ENCODE measurements at regions of chr1 and their contacts with region 1.

Region 1: GRCh38 chr1:205061665-205062069 is 18.7 kb downstream of the CNTN2 start:
- DNase-seq: peak; percentile 85
- H3K4me3 Mint-ChIP-seq: no peak overlapping the region
- H3K27ac Mint-ChIP-seq: no peak overlapping the region
- H3K4me1 Mint-ChIP-seq: no peaks in the 10 kb centered on the region
- H3K27me3 Mint-ChIP-seq: peaks cover 21% of the 10 kb centered on the region
- CTCF ChIP-seq: peak; percentile 99

Region 2: DNA sequence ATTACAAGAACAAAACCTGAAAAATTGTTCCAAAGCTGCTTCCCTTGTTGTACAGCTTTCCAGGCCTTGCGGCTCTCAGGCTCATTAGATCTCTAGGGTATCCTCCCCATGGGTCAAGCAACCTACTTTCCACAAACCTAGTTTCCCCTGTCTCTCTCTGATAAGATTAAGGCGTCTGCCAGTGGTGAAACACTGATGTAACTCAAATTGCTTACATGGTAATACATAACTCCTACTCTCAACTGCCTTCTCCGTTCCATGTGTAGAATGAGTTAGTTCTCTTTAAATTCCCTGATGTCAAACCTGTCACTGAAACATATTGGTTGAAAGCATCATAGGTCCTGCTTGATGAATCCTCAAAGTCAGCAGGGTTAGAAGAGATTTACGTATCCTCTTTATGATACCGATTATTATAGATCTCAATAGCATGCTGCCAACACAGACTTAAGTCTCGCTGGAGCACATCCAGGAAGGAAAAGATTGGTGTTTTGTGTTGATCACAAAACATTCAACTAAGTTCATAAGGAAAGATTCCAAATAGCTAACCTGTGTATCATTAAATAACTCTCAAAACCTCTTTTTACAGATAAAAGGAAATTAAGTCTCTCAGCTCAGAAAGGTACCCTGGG is 660.7 kb before region 1 on chr1:
- CTCF ChIA-PET with region 1: no interaction called
- POLR2A ChIA-PET with region 1: no interaction called
- intact Hi-C with region 1: no loop called
- DNase-seq: no peak
- H3K4me3 Mint-ChIP-seq: no peak overlapping the region
- H3K27ac Mint-ChIP-seq: peak overlapping the region; percentile 14
- H3K4me1 Mint-ChIP-seq: peaks cover 17% of the 10 kb centered on the region
- H3K27me3 Mint-ChIP-seq: no peaks in the 10 kb centered on the region
- CTCF ChIP-seq: no peak

Region 3: GRCh38 chr1:204812832-204813231 is 248.8 kb before region 1 on chr1:
- CTCF ChIA-PET with region 1: interaction called, 38 read pairs
- POLR2A ChIA-PET with region 1: no interaction called
- intact Hi-C with region 1: no loop called
- DNase-seq: no peak
- H3K4me3 Mint-ChIP-seq: no peak overlapping the region
- H3K27ac Mint-ChIP-seq: no peak overlapping the region
- H3K4me1 Mint-ChIP-seq: no peaks in the 10 kb centered on the region
- H3K27me3 Mint-ChIP-seq: peaks cover 50% of the 10 kb centered on the region
- CTCF ChIP-seq: no peak

Region 4: DNA sequence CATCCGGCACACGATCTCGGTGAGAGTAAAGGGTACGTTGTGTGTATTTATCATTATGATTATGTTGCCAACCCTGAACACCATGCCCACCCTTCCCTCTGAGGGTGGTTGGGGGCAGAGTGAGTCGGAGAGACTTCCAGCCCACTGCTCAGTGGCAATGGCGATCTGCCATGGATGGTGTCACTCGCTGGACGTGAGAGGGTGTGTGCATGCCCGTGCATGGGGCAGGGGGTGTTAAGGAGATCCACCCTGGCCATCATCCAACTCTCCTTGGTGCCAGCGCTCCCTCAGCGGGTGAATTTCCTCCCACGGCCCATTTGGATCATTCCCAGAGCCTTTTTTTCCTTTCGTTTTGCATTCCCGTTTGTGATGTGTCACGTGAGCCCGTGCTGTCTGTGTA is 92.7 kb before region 1 on chr1:
- CTCF ChIA-PET with region 1: interaction called, 272 read pairs
- POLR2A ChIA-PET with region 1: interaction called, 3 read pairs
- intact Hi-C with region 1: no loop called
- DNase-seq: no peak
- H3K4me3 Mint-ChIP-seq: no peak overlapping the region
- H3K27ac Mint-ChIP-seq: no peak overlapping the region
- H3K4me1 Mint-ChIP-seq: peaks cover 8% of the 10 kb centered on the region
- H3K27me3 Mint-ChIP-seq: peaks cover 92% of the 10 kb centered on the region
- CTCF ChIP-seq: no peak

Region 5: GRCh38 chr1:204997591-204998355 is 63.9 kb before region 1 on chr1:
- CTCF ChIA-PET with region 1: interaction called, 331 read pairs
- POLR2A ChIA-PET with region 1: interaction called, 6 read pairs
- intact Hi-C with region 1: no loop called
- DNase-seq: no peak
- H3K4me3 Mint-ChIP-seq: no peak overlapping the region
- H3K27ac Mint-ChIP-seq: no peak overlapping the region
- H3K4me1 Mint-ChIP-seq: no peaks in the 10 kb centered on the region
- H3K27me3 Mint-ChIP-seq: peaks cover 69% of the 10 kb centered on the region
- CTCF ChIP-seq: no peak

Region 6: DNA sequence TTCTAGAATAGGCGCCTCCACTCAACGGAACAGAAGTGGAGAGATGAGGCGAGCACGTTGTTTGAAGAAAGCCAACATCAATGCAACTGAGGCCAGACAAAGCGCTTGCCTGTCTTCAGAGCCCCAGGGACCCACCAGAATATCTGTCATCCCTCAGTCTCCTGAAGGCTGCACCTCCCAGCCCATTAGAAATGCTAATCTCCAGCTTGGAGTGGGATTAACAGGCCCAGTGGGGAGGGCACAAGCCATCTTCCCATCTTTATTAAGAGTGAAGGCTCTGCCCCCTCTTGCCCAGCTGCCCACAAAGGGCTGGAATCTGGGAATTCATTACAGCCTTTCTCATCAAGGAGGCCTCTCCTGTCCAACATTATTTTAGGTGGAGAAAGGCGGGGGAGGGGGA is 35.5 kb before region 1 on chr1:
- CTCF ChIA-PET with region 1: interaction called, 48 read pairs
- POLR2A ChIA-PET with region 1: no interaction called
- intact Hi-C with region 1: no loop called
- DNase-seq: no peak
- H3K4me3 Mint-ChIP-seq: no peak overlapping the region
- H3K27ac Mint-ChIP-seq: no peak overlapping the region
- H3K4me1 Mint-ChIP-seq: no peaks in the 10 kb centered on the region
- H3K27me3 Mint-ChIP-seq: peaks cover 63% of the 10 kb centered on the region
- CTCF ChIP-seq: no peak

Region 7: DNA sequence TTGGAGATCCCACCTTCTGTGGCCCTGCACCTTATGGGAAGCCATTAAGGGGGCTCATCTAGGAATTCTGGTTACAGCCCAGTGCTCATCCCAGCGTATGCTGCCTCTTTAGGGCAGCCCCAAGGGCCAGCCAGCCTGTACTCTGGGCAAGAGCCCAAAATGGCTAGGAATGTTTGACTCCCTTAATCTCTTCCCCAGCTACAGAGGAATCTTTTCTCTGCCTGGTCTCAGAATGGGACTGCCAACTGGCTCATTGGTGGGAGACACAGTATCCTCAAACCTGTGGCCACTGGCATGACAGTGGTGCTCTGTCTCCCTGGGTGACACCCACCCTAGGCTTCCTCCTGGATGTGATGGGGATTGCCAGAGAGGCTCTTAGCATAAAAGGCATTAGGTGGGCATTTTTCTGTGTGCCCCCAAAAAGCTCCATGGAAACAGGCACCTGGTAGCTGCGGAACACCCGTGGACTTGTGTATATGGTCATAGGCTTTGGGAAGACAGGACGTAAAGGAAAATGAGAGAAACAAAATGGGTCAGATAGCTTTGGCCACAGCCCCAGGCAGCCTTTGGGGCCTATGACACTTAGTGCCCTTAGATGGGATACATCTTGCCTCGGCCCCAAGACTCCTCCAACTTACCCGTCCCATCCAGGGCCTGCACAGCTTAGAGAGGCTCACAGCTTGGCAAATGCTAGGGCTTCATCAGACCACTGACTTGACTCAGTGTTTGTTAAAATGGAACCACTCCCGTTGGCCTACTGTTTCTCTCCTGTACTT is 15.7 kb after region 1 on chr1:
- CTCF ChIA-PET with region 1: interaction called, 182 read pairs
- POLR2A ChIA-PET with region 1: interaction called, 5 read pairs
- intact Hi-C with region 1: no loop called
- DNase-seq: no peak
- H3K4me3 Mint-ChIP-seq: no peak overlapping the region
- H3K27ac Mint-ChIP-seq: no peak overlapping the region
- H3K4me1 Mint-ChIP-seq: peaks cover 28% of the 10 kb centered on the region
- H3K27me3 Mint-ChIP-seq: no peaks in the 10 kb centered on the region
- CTCF ChIP-seq: no peak

Region 8: DNA sequence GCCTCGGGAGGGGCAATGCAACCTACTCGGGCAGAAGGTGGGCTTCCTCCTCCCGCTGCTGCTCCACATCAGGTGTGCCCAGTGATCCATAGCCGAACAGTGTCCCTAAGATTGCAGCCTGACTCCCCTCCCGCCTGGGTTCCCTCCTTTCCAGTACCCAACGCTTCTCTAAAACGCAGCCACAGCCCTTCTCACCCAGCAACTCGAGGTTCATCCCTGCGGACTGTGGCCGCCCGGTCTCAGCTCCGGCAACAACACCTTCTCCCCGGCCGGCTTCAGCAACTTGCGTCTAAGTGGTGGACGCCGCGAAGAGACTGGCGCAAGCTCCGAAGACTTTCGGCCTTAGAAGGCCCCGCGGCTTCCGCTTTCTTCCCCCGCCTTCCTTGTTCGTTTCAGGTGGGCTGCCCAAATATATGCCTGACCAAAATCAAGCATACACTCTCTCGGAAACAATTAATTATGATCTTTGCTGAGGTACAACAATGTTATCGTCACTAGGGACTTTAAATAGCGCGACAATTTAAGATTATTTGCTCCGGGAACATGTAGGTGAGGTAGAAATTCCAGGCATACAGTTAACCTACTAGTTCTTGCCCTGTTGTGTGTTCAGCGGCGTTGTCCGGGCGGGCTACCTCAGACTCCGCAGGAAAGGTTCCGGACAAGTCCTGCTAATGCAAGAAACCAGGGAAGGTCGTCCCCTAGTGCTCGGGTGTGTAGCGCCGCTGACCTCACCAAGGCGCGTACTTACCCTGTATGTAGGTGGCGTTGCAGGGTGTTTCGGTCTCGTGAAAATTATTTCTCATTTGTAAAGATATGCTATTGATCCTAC is 60.2 kb after region 1 on chr1 and contains the start of gene RBBP5:
- CTCF ChIA-PET with region 1: interaction called, 45 read pairs
- POLR2A ChIA-PET with region 1: interaction called, 15 read pairs
- intact Hi-C with region 1: no loop called
- DNase-seq: peak; percentile 100
- H3K4me3 Mint-ChIP-seq: peak within 1 kb of the TSS; percentile 96
- H3K27ac Mint-ChIP-seq: peak within 1 kb of the TSS; percentile 100
- H3K4me1 Mint-ChIP-seq: peaks cover 11% of the 10 kb centered on the region
- H3K27me3 Mint-ChIP-seq: no peaks in the 10 kb centered on the region
- CTCF ChIP-seq: peak; percentile 90
- total RNA-seq, gene RBBP5: 24.8 and 30.4 TPM in 2 replicates

Measured in MCF 10A (cell line).